IMR-90 (cell line): ENCODE measurements at regions of chr20 and their contacts with region 1.

Region 1: GRCh38 chr20:44253528-44253927 is 6.4 kb downstream of the GDAP1L1 start:
- DNase-seq: no peak
- ATAC-seq: no peak
- H3K4me3 ChIP-seq: no peak overlapping the region
- H3K27ac ChIP-seq: no peak overlapping the region
- H3K4me1 ChIP-seq: no peaks in the 10 kb centered on the region
- H3K27me3 ChIP-seq: peaks cover 4% of the 10 kb centered on the region; the same call in 1 of the 2 replicates
- CTCF ChIP-seq: no peak
- POLR2A ChIP-seq: no peak
- RAD21 ChIP-seq: no peak

Region 2: DNA sequence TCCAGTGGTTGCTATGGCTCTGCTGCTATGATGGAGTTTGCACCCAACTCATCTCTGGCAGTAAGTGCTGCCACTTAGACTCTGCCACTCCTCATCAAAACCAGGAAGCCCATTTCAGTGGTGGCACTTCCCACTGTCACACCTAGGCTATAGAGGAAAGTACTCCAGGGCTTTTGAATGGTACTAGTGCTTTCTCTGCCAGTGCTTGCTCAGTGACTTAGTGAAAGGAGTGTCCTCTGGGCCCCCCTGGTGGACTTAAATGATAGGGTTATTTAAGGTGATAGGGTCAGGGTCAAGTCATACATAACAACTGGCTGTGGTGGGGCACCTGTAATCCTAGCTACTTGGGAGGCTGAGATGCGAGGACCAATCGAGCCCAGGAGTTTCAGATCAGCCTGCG is 34.7 kb after region 1 on chr20:
- CTCF ChIA-PET with region 1: no interaction called
- POLR2A ChIA-PET with region 1: no interaction called
- dilution Hi-C with region 1: no loop called
- in situ Hi-C with region 1: no loop called
- intact Hi-C with region 1: loop called (anchors 5 kb)
- DNase-seq: no peak
- ATAC-seq: no peak
- H3K4me3 ChIP-seq: no peak overlapping the region
- H3K27ac ChIP-seq: no peak overlapping the region
- H3K4me1 ChIP-seq: no peaks in the 10 kb centered on the region; the same call in 1 of the 2 replicates
- H3K27me3 ChIP-seq: no peaks in the 10 kb centered on the region
- CTCF ChIP-seq: no peak
- POLR2A ChIP-seq: no peak
- RAD21 ChIP-seq: no peak